B cell (primary cell): ENCODE measurements at regions of chr19 and their contacts with region 1.

Region 1: DNA sequence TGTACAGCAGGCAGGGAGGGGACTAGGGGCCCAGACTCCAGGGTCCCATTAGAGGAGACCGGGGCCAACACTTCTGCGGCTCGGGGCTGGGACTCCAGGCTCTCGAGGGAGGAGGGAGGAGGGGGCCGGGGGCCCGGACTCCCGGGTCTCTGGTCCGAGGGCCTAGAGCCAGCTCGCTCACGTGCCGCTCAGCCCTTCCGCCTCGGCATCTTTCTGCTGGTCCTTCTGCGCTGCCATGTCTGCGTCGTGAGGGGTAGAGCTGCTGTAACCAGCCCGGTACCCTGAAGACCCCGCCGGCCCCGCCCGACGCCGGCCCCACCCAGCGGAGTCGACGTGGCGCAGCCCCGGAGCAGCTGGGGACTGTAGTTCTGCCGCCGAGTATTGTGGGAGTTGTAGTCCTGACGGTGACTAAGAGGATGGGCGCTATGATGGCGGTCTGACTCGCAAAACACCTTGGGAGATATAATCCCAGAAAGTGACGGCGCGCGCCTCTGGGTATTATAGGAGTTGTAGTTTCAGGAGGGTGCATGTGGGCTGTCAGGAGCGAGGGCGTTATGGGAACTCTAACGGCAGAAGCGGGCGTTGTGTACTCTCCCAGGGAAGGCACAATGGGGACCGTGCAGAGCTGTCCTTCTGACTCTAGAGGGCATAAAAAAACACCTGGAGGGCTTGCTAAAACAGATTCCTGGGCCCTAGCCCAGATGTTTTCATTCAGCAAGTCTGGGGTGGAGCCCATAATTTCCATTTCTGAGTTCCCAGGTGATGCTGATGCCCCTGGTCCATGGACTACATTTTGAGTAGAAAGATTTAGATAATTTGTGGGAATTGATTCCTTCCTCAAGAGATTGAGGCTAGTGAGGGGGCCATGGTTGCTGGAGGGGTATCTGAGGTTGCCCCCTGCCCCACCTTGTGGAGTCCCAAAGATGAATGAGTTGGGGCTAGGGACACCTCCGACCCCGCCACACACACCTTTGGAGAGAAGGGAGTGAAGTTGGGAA is at the start of gene RABAC1:
- DNase-seq: peak; percentile 89
- ATAC-seq: peak; percentile 90
- H3K4me3 ChIP-seq: peak within 1 kb of the TSS; percentile 57 to 94 (median 81)
- H3K4me3 Mint-ChIP-seq: peak within 1 kb of the TSS; percentile 99
- H3K27ac ChIP-seq: peak within 1 kb of the TSS; percentile 78
- H3K27ac Mint-ChIP-seq: peak within 1 kb of the TSS; percentile 89
- H3K4me1 ChIP-seq: peaks cover 10 to 22% of the 10 kb centered on the region in 2 donors
- H3K4me1 Mint-ChIP-seq: peaks cover 18% of the 10 kb centered on the region
- H3K27me3 ChIP-seq: no peaks in the 10 kb centered on the region
- H3K27me3 Mint-ChIP-seq: no peaks in the 10 kb centered on the region
- CTCF ChIP-seq: peak; percentile 44
- total RNA-seq, gene RABAC1: 139 and 146 TPM in 2 replicates

Region 2: DNA sequence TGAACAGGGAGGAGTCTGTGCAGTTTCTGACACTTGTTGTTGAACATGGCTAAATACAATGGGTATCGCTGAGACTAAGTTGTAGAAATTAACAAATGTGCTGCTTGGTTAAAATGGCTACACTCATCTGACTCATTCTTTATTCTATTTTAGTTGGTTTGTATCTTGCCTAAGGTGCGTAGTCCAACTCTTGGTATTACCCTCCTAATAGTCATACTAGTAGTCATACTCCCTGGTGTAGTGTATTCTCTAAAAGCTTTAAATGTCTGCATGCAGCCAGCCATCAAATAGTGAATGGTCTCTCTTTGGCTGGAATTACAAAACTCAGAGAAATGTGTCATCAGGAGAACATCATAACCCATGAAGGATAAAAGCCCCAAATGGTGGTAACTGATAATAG is 187.9 kb before region 1 on chr19:
- CTCF ChIA-PET with region 1: no interaction called
- POLR2A ChIA-PET with region 1: no interaction called
- intact Hi-C with region 1: no loop called
- DNase-seq: no peak
- ATAC-seq: no peak
- H3K4me3 ChIP-seq: no peak overlapping the region
- H3K4me3 Mint-ChIP-seq: no peak overlapping the region
- H3K27ac ChIP-seq: no peak overlapping the region
- H3K27ac Mint-ChIP-seq: no peak overlapping the region
- H3K4me1 ChIP-seq: no peaks in the 10 kb centered on the region
- H3K4me1 Mint-ChIP-seq: no peaks in the 10 kb centered on the region
- H3K27me3 ChIP-seq: no peaks in the 10 kb centered on the region
- H3K27me3 Mint-ChIP-seq: peaks cover 16% of the 10 kb centered on the region
- CTCF ChIP-seq: no peak

Region 3: GRCh38 chr19:41795031-41795461 is 164.3 kb before region 1 on chr19:
- CTCF ChIA-PET with region 1: interaction called, 7 read pairs
- POLR2A ChIA-PET with region 1: no interaction called
- intact Hi-C with region 1: loop called (anchors 10 kb)
- DNase-seq: peak; percentile 74
- ATAC-seq: peak; percentile 92
- H3K4me3 ChIP-seq: no peak overlapping the region
- H3K4me3 Mint-ChIP-seq: no peak overlapping the region
- H3K27ac ChIP-seq: no peak overlapping the region
- H3K27ac Mint-ChIP-seq: peak overlapping the region; percentile 2
- H3K4me1 ChIP-seq: peaks cover 0 to 2% of the 10 kb centered on the region in 2 donors
- H3K4me1 Mint-ChIP-seq: peaks cover 6% of the 10 kb centered on the region
- H3K27me3 ChIP-seq: peaks cover 0 to 8% (median 3%) of the 10 kb centered on the region in 4 experiments
- H3K27me3 Mint-ChIP-seq: peaks cover 25% of the 10 kb centered on the region
- CTCF ChIP-seq: peak; percentile 91

Region 4: GRCh38 chr19:41883821-41884733 is 75.3 kb before region 1 on chr19:
- CTCF ChIA-PET with region 1: interaction called, 9 read pairs
- POLR2A ChIA-PET with region 1: interaction called, 6 read pairs
- intact Hi-C with region 1: loop called (anchors 2 kb)
- DNase-seq: peak; percentile 95
- ATAC-seq: peak; percentile 78
- H3K4me3 ChIP-seq: peak overlapping the region; percentile 83 to 100 (median 97)
- H3K4me3 Mint-ChIP-seq: peak overlapping the region; percentile 93
- H3K27ac ChIP-seq: peak overlapping the region; percentile 72 to 87
- H3K27ac Mint-ChIP-seq: peak overlapping the region; percentile 98
- H3K4me1 ChIP-seq: peaks cover 72 to 83% of the 10 kb centered on the region in 2 donors
- H3K4me1 Mint-ChIP-seq: peaks cover 78% of the 10 kb centered on the region
- H3K27me3 ChIP-seq: no peaks in the 10 kb centered on the region
- H3K27me3 Mint-ChIP-seq: no peaks in the 10 kb centered on the region
- CTCF ChIP-seq: no peak

Region 5: DNA sequence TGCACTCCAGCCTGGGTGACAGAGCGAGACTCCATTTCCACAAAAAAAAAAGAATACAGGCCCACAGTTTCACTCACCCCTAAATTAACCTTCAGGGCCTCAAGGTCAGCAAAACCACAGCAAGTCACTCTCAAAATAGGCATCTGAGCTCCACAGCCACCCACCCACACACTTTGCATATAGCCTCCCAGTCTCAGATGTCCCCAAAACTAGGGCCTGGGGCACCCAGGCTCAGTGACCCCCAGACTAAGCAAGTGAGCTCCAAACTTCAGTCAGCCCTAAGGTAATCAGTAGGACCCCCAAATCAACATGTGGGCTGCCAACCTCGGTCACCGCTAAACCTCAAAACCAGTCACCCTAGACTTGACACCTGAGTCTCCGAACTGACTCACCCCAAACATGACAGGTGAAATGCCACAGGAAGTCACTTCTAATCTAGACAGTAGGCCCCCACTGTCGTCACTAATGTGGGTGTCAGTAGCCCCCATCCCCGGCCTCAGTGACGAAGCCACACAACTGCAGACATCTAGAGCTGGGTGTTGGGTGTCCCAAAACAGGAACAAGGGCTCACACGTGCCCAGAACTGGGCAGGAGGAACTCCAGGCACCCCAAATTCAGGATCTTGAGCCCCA is 14.1 kb before region 1 on chr19:
- CTCF ChIA-PET with region 1: interaction called, 39 read pairs
- POLR2A ChIA-PET with region 1: interaction called, 7 read pairs
- intact Hi-C with region 1: loop called (anchors 2 kb)
- DNase-seq: peak; percentile 97
- ATAC-seq: peak; percentile 87
- H3K4me3 ChIP-seq: peak overlapping the region in 1 of 5 experiments; percentile 23
- H3K4me3 Mint-ChIP-seq: peak overlapping the region; percentile 81
- H3K27ac ChIP-seq: peak overlapping the region; percentile 94 to 96
- H3K27ac Mint-ChIP-seq: peak overlapping the region; percentile 100
- H3K4me1 ChIP-seq: peaks cover 57 to 71% of the 10 kb centered on the region in 2 donors
- H3K4me1 Mint-ChIP-seq: peaks cover 71% of the 10 kb centered on the region
- H3K27me3 ChIP-seq: no peaks in the 10 kb centered on the region
- H3K27me3 Mint-ChIP-seq: no peaks in the 10 kb centered on the region
- CTCF ChIP-seq: no peak

Region 6: DNA sequence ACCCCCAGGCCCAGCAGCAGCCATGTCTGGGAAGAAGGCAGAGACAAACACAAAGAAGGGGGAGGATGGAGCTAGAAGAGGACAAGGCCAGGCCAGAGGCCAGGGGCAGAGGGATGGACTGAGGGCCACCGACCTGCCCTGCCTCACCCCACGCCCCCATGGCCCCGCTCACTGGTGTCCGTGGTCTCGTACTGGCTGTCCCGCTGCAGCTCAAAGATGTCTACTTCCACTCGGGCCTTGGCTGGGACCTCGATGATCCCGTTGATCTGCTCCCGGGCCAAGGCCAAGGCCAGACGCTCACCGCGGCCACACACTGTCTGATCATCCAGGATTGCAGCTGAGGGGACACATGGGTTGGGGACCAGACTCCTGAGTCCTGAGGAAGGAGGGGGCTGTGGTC is 105.7 kb after region 1 on chr19:
- CTCF ChIA-PET with region 1: no interaction called
- POLR2A ChIA-PET with region 1: no interaction called
- intact Hi-C with region 1: no loop called
- DNase-seq: no peak
- ATAC-seq: no peak
- H3K4me3 ChIP-seq: no peak overlapping the region
- H3K4me3 Mint-ChIP-seq: no peak overlapping the region
- H3K27ac ChIP-seq: no peak overlapping the region
- H3K27ac Mint-ChIP-seq: no peak overlapping the region
- H3K4me1 ChIP-seq: peaks cover 12 to 18% of the 10 kb centered on the region in 2 donors
- H3K4me1 Mint-ChIP-seq: no peaks in the 10 kb centered on the region
- H3K27me3 ChIP-seq: peaks cover 0 to 38% (median 21%) of the 10 kb centered on the region in 4 experiments
- H3K27me3 Mint-ChIP-seq: peaks cover 15% of the 10 kb centered on the region
- CTCF ChIP-seq: no peak

Region 7: GRCh38 chr19:42075616-42076379 is 116.4 kb after region 1 on chr19 and contains the start of gene ZNF574:
- CTCF ChIA-PET with region 1: no interaction called
- POLR2A ChIA-PET with region 1: interaction called, 4 read pairs
- intact Hi-C with region 1: loop called (anchors 2 kb)
- DNase-seq: peak; percentile 100
- ATAC-seq: peak; percentile 94
- H3K4me3 ChIP-seq: peak within 1 kb of the TSS; percentile 56 to 93 (median 86)
- H3K4me3 Mint-ChIP-seq: peak within 1 kb of the TSS; percentile 97
- H3K27ac ChIP-seq: peak within 1 kb of the TSS; percentile 95 to 99
- H3K27ac Mint-ChIP-seq: peak within 1 kb of the TSS; percentile 99
- H3K4me1 ChIP-seq: peaks cover 20 to 23% of the 10 kb centered on the region in 2 donors
- H3K4me1 Mint-ChIP-seq: peaks cover 35% of the 10 kb centered on the region
- H3K27me3 ChIP-seq: no peaks in the 10 kb centered on the region
- H3K27me3 Mint-ChIP-seq: peaks cover 5% of the 10 kb centered on the region
- CTCF ChIP-seq: no peak
- total RNA-seq, gene ZNF574: 27.4 and 28.4 TPM in 2 replicates

Region 8: GRCh38 chr19:42480335-42481095 is 521.2 kb after region 1 on chr19:
- CTCF ChIA-PET with region 1: no interaction called
- POLR2A ChIA-PET with region 1: no interaction called
- intact Hi-C with region 1: no loop called
- DNase-seq: no peak
- ATAC-seq: no peak
- H3K4me3 ChIP-seq: no peak overlapping the region
- H3K4me3 Mint-ChIP-seq: peak overlapping the region; percentile 4
- H3K27ac ChIP-seq: no peak overlapping the region
- H3K27ac Mint-ChIP-seq: no peak overlapping the region
- H3K4me1 ChIP-seq: peaks cover 10 to 11% of the 10 kb centered on the region in 2 donors
- H3K4me1 Mint-ChIP-seq: peaks cover 11% of the 10 kb centered on the region
- H3K27me3 ChIP-seq: no peaks in the 10 kb centered on the region
- H3K27me3 Mint-ChIP-seq: no peaks in the 10 kb centered on the region
- CTCF ChIP-seq: no peak